ENCODE measurements at regions of chr19 and their contacts with region 1.

Region 1: GRCh38 chr19:4597278-4597974 is 37.9 kb upstream of the SEMA6B start:
- DNase-seq: no peak
- ATAC-seq: no peak
- H3K4me3 Mint-ChIP-seq: peak overlapping the region; percentile 38
- H3K27ac Mint-ChIP-seq: no peak overlapping the region
- H3K4me1 Mint-ChIP-seq: peaks cover 14% of the 10 kb centered on the region
- H3K27me3 Mint-ChIP-seq: peaks cover 27% of the 10 kb centered on the region
- CTCF ChIP-seq: no peak

Region 2: GRCh38 chr19:3788996-3789778 is 808.2 kb before region 1 on chr19:
- CTCF ChIA-PET with region 1: no interaction called
- POLR2A ChIA-PET with region 1: interaction called, 15 read pairs
- intact Hi-C with region 1: no loop called
- DNase-seq: no peak
- ATAC-seq: no peak
- H3K4me3 Mint-ChIP-seq: peak overlapping the region; percentile 48
- H3K27ac Mint-ChIP-seq: peak overlapping the region; percentile 46
- H3K4me1 Mint-ChIP-seq: peaks cover 21% of the 10 kb centered on the region
- H3K27me3 Mint-ChIP-seq: peaks cover 5% of the 10 kb centered on the region
- CTCF ChIP-seq: no peak

Region 3: GRCh38 chr19:4042731-4043082 is 554.7 kb before region 1 on chr19:
- CTCF ChIA-PET with region 1: no interaction called
- POLR2A ChIA-PET with region 1: no interaction called
- intact Hi-C with region 1: no loop called
- DNase-seq: no peak
- ATAC-seq: no peak
- H3K4me3 Mint-ChIP-seq: no peak overlapping the region
- H3K27ac Mint-ChIP-seq: peak overlapping the region; percentile 30
- H3K4me1 Mint-ChIP-seq: peaks cover 4% of the 10 kb centered on the region
- H3K27me3 Mint-ChIP-seq: no peaks in the 10 kb centered on the region
- CTCF ChIP-seq: no peak

Region 4: DNA sequence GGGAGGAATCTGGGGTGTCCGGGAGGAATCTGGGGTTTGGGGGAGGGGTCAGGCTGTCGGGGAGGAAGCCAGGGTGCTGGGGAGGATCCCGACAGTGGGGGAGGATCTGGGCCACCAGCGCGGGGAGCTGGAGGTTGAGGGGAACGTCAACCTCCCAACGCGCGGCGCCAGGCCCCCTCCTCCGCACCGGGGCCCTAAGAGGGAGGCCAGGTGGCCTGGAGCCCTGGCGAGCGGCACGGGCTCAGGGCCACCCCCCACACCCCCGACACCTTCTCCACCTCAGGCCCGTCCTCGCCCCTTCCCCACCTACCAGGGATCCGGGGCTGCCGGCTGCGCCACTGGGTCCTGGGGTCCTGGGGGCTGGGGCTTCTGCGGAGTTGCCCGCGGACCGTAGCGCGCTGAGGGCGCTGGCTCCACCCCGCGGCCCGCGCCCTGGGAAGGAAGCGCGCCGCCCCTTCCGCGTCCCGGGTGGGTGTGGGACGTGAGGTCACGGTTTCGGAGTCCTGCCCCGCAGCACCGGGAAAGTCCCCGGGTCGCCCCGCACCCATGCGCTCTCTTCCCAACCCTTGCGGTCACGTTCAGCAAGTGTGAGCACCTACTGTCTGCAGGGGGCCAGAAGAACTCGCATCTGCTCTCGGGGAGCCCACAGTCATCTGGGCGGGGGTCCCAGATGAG is 234.0 kb after region 1 on chr19 and contains the start of gene TICAM1:
- CTCF ChIA-PET with region 1: no interaction called
- POLR2A ChIA-PET with region 1: no interaction called
- intact Hi-C with region 1: no loop called
- DNase-seq: peak; percentile 78
- ATAC-seq: peak; percentile 76
- H3K4me3 Mint-ChIP-seq: peak within 1 kb of the TSS; percentile 90
- H3K27ac Mint-ChIP-seq: peak within 1 kb of the TSS; percentile 94
- H3K4me1 Mint-ChIP-seq: peaks cover 40% of the 10 kb centered on the region
- H3K27me3 Mint-ChIP-seq: no peaks in the 10 kb centered on the region
- CTCF ChIP-seq: no peak
- total RNA-seq, gene TICAM1: 34.4 and 39.4 TPM in 2 replicates